Naive thymus-derived CD4-positive, alpha-beta T cell (primary cell): ENCODE measurements at regions of chr6 and their contacts with region 1.

Region 1: GRCh38 chr6:137165375-137166246 is 7.8 kb downstream of the IL22RA2 start:
- DNase-seq: peak in 1 of 9 donors; percentile 38
- ATAC-seq: peak; percentile 68
- H3K4me3 ChIP-seq: no peak overlapping the region
- H3K4me3 Mint-ChIP-seq: peak overlapping the region in 4 of 10 donors; percentile 3 to 74 (median 38)
- H3K27ac ChIP-seq: no peak overlapping the region
- H3K27ac Mint-ChIP-seq: peak overlapping the region in 2 of 9 donors; percentile 62 to 79
- H3K4me1 ChIP-seq: peaks cover 0 to 19% of the 10 kb centered on the region in 2 donors
- H3K4me1 Mint-ChIP-seq: peaks cover 12 to 53% (median 18%) of the 10 kb centered on the region in 7 donors
- H3K27me3 ChIP-seq: peaks cover 0 to 3% of the 10 kb centered on the region in 2 donors
- H3K27me3 Mint-ChIP-seq: peaks cover 4 to 25% (median 9%) of the 10 kb centered on the region in 5 donors

Region 2: DNA sequence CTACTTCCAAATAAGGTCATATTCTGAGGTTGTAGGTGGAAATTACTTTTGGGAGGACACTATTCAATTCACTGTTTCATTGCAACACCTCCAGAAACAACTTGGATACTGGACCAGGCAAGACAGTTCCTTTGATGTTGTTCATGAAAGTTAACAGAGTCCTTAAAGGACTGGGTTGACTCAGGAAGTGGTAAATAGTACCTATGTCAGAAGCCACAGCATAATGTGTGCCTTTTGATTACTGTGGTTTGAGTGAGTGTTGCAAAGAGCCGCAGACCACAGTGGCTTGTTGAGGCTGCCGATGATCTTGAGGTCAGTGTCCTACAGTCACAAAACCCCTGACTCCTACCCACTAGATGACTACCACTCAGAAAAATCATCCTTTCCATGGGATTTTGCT is 131.8 kb before region 1 on chr6:
- CTCF ChIA-PET with region 1: no interaction called
- POLR2A ChIA-PET with region 1: no interaction called
- intact Hi-C with region 1: loop called in 1 of 2 experiments (anchors 5 kb)
- DNase-seq: peak in 7 of 9 donors; percentile 1 to 60 (median 28)
- ATAC-seq: peak; percentile 91
- H3K4me3 ChIP-seq: no peak overlapping the region
- H3K4me3 Mint-ChIP-seq: peak overlapping the region in 1 of 10 donors; percentile 38
- H3K27ac ChIP-seq: no peak overlapping the region
- H3K27ac Mint-ChIP-seq: peak overlapping the region in 2 of 9 donors; percentile 38 to 44
- H3K4me1 ChIP-seq: peaks cover 0 to 10% of the 10 kb centered on the region in 2 donors
- H3K4me1 Mint-ChIP-seq: peaks cover 6 to 25% (median 10%) of the 10 kb centered on the region in 7 donors
- H3K27me3 ChIP-seq: peaks cover 0 to 11% of the 10 kb centered on the region in 2 donors
- H3K27me3 Mint-ChIP-seq: peaks cover 45 to 79% (median 60%) of the 10 kb centered on the region in 5 donors

Region 3: DNA sequence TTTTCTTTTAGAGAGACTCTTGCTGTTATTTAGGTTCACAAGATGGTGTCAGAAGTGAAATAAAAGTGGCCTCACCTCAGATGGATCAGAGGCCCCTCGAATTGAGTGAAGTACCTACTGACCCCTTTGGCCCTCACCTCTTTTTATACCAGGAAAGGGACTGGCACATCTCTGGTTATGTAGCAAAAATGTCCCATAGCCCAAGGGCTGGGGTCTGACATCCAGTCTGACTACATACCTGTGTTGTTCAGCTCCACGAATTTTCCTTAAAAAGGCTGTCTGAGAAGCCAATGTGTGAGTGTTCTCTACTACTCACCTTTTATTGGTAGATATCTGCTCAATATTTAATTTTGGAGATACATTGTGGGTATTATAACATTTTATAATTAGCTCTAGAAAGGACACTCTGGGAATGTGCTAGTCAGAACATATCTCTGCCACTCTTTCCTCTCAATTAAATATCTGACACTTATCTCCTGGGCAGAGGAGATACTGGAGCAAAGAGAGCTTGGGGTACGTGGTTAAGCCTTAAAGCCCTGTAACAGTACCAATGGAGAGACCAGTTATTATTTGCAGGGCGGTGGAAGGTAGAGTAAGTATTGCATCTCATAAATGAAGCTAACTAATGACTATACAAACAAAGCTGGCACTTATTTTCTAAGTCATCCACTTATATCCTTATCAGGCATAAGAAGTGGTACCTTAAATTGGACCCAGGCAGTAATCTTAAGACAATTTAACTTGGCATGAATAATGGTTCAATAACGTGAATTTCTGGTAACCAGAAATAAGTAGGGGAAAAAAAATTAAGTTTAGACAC is 27.9 kb after region 1 on chr6:
- CTCF ChIA-PET with region 1: no interaction called
- POLR2A ChIA-PET with region 1: no interaction called
- intact Hi-C with region 1: no loop called
- DNase-seq: no peak
- ATAC-seq: no peak
- H3K4me3 ChIP-seq: no peak overlapping the region
- H3K4me3 Mint-ChIP-seq: no peak overlapping the region
- H3K27ac ChIP-seq: no peak overlapping the region
- H3K27ac Mint-ChIP-seq: no peak overlapping the region
- H3K4me1 ChIP-seq: peaks cover 0 to 16% of the 10 kb centered on the region in 2 donors
- H3K4me1 Mint-ChIP-seq: peaks cover 0 to 17% (median 0%) of the 10 kb centered on the region in 7 donors
- H3K27me3 ChIP-seq: no peaks in the 10 kb centered on the region
- H3K27me3 Mint-ChIP-seq: no peaks in the 10 kb centered on the region